ENCODE measurements at regions of chr1 and their contacts with region 1.

Region 1: DNA sequence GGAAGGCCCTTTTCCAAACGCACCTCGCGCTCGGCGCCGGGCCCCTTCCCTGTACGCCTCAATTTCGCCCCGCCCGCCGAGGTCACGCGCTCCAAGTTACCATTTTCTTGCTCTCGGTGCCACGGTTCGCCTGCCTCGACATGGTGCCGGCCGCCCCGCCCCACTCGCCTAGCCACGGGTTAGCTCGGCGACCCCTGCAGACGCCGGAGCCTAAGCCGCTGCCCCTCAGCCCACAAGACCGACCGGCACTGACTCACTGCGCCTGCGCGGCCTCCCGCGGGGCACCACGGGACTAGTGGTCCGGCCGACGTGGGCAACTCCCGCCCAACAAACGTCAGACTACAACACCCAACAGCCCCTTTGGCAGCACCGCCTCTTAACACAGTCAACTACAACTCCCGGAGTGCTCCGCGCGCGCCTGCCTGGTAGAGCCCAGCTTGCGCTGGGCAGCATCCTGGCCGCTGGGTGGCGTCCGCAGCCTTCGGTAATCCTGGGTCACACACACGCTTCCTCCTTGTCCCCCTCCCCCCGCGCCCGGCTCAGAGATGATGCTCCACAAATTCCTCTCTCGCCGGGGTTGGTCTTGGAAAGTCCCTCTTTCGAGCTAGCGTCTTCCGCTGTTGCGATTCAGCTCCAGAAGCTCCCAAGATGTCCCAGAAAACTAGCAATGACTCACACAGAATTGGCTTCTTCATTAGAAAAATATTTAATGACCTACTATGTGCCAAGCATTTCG is at the start of gene TRAPPC3:
- DNase-seq: peak; percentile 100
- ATAC-seq: peak; percentile 92
- H3K4me3 Mint-ChIP-seq: peak within 1 kb of the TSS; percentile 100
- H3K27ac Mint-ChIP-seq: peak within 1 kb of the TSS; percentile 97
- H3K4me1 Mint-ChIP-seq: peaks cover 60% of the 10 kb centered on the region
- H3K27me3 Mint-ChIP-seq: no peaks in the 10 kb centered on the region
- CTCF ChIP-seq: peak; percentile 70
- total RNA-seq, gene TRAPPC3: 47.9 to 48.4 TPM

Region 2: DNA sequence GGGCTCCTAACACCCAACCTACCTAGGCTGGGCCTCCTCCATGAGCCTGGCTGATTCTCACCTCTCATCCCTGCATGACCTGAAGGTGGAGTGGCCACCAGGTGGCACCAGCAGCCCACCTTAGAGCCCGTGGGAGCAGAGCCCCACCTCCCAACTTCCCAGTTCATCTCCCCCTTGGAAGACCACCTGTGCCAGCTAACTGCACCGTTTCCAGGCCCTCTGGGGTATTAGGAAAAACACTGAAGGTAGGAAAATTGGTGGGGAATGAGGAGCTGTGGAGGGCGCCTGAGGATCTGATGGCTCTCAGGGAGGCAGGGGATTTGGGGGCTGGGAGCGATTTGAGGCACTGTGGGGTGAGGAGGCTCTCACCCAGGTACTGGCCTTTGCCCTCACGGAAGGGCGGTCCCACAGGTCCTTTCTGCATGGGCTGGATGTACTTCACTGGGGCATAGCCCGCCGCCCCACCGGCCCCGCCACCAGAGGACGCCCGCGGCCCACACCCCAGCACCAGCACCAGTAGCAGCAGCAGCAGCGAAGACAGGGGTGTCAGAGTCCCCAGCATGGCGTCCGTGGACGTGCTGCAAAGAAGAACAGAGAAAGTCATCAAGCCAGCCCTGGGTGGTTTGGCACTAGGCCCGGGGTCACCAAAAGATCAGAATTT is 49.6 kb before region 1 on chr1:
- CTCF ChIA-PET with region 1: interaction called, 12 read pairs
- POLR2A ChIA-PET with region 1: no interaction called
- intact Hi-C with region 1: no loop called
- DNase-seq: peak; percentile 86
- ATAC-seq: peak; percentile 92
- H3K4me3 Mint-ChIP-seq: no peak overlapping the region
- H3K27ac Mint-ChIP-seq: no peak overlapping the region
- H3K4me1 Mint-ChIP-seq: peaks cover 6% of the 10 kb centered on the region
- H3K27me3 Mint-ChIP-seq: no peaks in the 10 kb centered on the region
- CTCF ChIP-seq: peak; percentile 93

Region 3: DNA sequence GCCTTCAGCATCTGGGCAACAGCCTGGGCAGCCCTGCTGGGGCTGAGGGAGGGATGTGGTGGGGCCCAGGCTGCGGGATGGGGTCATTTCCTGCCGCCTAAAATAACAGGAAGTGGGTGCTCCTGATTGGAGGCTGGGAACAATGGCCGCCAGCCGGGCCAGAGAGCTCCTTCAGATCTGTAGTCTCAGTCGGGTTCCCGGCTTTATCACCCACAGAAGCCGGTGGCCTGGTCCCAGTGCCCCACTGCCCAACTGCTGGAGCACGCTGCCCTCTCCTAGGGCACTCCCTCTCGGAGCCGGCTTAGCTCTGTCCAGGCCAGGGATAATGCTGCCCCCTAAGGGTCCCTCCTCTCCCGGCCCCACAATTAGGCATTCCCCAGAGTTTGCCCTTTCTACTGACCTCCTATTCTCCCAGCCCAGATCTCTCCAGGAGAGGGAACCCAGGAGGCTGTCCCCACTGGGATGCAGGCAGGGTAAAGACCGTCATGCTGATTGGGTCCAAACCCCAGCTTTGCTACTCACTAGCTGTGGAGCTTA is 11.6 kb after region 1 on chr1:
- CTCF ChIA-PET with region 1: interaction called, 95 read pairs
- POLR2A ChIA-PET with region 1: interaction called, 72 read pairs
- intact Hi-C with region 1: no loop called
- DNase-seq: peak; percentile 88
- ATAC-seq: peak; percentile 56
- H3K4me3 Mint-ChIP-seq: peak overlapping the region; percentile 80
- H3K27ac Mint-ChIP-seq: peak overlapping the region; percentile 94
- H3K4me1 Mint-ChIP-seq: peaks cover 60% of the 10 kb centered on the region
- H3K27me3 Mint-ChIP-seq: no peaks in the 10 kb centered on the region
- CTCF ChIP-seq: no peak

Region 4: GRCh38 chr1:36187800-36188593 is 38.6 kb after region 1 on chr1:
- CTCF ChIA-PET with region 1: interaction called, 84 read pairs
- POLR2A ChIA-PET with region 1: interaction called, 20 read pairs
- intact Hi-C with region 1: loop called (anchors 5 kb)
- DNase-seq: peak; percentile 88
- ATAC-seq: peak; percentile 98
- H3K4me3 Mint-ChIP-seq: no peak overlapping the region
- H3K27ac Mint-ChIP-seq: peak overlapping the region; percentile 24
- H3K4me1 Mint-ChIP-seq: peaks cover 2% of the 10 kb centered on the region
- H3K27me3 Mint-ChIP-seq: no peaks in the 10 kb centered on the region
- CTCF ChIP-seq: peak; percentile 81

Region 5: DNA sequence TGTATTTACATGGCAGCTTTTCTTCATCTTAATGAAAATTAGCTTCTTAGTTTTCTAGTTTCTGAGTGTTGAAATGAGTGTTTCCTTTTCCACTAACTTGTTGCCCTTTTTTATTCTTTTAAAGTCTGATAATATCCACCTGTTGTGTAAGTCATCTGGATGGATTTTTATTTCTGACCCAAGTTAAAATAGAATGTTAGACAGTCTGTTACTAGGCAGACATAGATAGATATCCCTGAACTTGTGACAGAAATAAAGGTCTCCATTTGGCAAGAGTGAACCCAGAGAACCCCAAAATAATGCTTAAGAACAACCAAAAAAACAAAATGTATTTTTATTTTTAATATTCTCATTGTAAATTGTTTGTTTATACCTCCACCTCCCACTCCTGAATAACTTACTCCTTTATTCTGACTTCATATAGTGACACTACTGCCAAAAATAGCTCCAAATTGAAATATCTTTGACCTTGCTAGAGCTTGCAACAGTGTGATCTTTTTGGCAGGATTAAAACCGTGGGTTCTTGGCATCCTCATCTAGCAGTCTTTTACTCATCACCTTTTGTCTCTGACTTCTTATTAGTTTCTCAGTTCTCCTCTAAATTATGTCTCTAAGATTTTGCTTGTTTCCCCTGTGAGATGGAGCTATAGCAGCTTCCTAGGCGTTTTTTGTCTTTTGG is 129.8 kb after region 1 on chr1:
- CTCF ChIA-PET with region 1: interaction called, 18 read pairs
- POLR2A ChIA-PET with region 1: interaction called, 3 read pairs
- intact Hi-C with region 1: no loop called
- DNase-seq: no peak
- ATAC-seq: no peak
- H3K4me3 Mint-ChIP-seq: no peak overlapping the region
- H3K27ac Mint-ChIP-seq: peak overlapping the region; percentile 55
- H3K4me1 Mint-ChIP-seq: peaks cover 37% of the 10 kb centered on the region
- H3K27me3 Mint-ChIP-seq: no peaks in the 10 kb centered on the region
- CTCF ChIP-seq: no peak

Region 6: GRCh38 chr1:36300526-36300925 is 151.1 kb after region 1 on chr1:
- CTCF ChIA-PET with region 1: interaction called, 24 read pairs
- POLR2A ChIA-PET with region 1: interaction called, 3 read pairs
- intact Hi-C with region 1: no loop called
- DNase-seq: peak; percentile 40
- ATAC-seq: peak; percentile 63
- H3K4me3 Mint-ChIP-seq: no peak overlapping the region
- H3K27ac Mint-ChIP-seq: peak overlapping the region; percentile 89
- H3K4me1 Mint-ChIP-seq: peaks cover 46% of the 10 kb centered on the region
- H3K27me3 Mint-ChIP-seq: no peaks in the 10 kb centered on the region
- CTCF ChIP-seq: no peak

Region 7: DNA sequence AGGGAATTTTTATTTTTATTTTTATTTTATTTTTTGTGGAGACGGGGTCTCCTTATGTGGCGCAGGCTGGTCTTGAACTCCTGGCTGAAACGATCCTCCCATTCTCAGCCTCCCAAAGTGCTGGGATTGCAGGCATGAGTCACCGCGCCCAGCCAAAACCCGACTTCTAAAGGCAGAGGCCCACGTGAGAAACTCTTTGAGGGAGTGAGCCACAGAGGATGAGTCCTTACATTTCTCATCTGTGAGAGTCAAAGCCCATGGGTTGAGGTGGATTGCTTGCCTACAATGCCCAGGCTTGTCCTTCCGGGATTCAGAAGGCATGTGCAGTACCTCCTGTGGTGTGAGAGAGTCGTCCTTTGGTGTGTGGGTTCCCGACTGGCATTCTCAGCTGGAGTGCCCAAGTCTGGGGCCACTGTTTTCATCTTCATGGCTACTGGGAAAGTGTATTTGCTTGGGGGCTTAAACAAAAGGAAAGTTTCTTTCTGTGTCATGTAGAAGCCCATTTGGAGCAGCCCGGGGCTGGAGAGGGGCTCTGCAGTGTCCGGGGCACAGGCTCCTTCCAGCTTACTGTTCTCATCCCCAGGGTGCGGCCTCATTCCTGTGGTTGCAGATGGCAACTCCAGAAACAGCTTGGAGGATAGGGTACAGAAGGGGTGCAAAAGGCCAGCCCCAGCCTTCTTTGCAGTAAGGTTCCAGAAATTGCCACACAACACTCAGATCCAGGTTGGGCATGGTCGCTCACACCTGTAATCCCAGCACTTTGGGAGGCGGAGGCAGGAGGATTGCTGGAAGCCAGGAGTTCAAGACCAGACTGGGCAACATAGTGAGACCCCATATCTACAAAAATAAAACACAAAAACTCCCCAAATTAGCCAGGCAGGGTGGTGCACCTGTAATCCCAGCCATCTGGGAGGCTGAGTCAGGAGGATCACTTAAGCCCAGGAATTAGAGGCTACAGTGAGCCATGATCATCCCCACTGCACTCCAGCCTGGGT is 362.7 kb after region 1 on chr1:
- CTCF ChIA-PET with region 1: no interaction called
- POLR2A ChIA-PET with region 1: no interaction called
- intact Hi-C with region 1: no loop called
- DNase-seq: no peak
- ATAC-seq: no peak
- H3K4me3 Mint-ChIP-seq: no peak overlapping the region
- H3K27ac Mint-ChIP-seq: no peak overlapping the region
- H3K4me1 Mint-ChIP-seq: no peaks in the 10 kb centered on the region
- H3K27me3 Mint-ChIP-seq: peaks cover 6% of the 10 kb centered on the region
- CTCF ChIP-seq: no peak